ENCODE measurements at regions of chr17 and their contacts with region 1.

Region 1: DNA sequence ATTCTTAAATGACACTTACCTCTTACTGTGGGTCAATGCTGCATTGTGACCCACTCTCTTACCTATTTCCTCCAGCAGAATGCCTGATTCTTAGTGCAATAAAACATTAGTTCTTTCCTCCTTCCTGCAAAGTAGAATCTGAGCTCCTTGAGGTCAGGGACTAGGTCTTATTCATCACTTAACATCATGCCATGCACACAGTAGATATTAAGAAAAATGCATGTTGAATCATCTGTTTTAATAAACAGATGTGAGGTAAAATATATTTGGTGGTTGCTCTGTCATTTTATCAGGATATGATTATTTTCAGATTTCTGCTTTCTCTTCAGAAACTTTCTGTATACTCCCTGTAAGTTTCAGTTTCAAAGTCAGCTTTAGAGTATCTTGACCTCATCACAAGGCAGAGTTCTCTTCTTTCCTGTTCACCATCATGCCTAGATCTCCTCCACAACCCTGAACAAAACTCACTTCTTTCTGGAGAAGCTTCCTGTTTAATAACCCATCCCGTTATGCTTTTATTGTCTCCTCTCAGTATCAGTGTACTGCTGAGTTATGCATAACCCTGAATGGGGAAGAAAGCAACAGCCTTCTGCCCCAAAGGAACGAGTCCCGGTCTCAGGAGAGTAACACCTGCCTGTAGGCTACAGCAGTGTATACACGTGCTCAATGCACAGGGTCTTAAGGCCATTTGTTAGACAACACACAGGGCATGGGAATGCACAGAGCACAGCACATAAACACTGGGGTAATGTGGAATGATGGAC is 30.3 kb upstream of the SUPT4H1 start:
- DNase-seq: peak in 1 of 14 experiments; percentile 45
- ATAC-seq: no peak
- H3K4me3 ChIP-seq: no peak overlapping the region
- H3K4me3 Mint-ChIP-seq: peak overlapping the region; percentile 1
- H3K27ac ChIP-seq: no peak overlapping the region
- H3K27ac Mint-ChIP-seq: peak overlapping the region; percentile 53
- H3K4me1 ChIP-seq: peaks cover 30% of the 10 kb centered on the region
- H3K4me1 Mint-ChIP-seq: peaks cover 46% of the 10 kb centered on the region
- H3K27me3 ChIP-seq: no peaks in the 10 kb centered on the region
- H3K27me3 Mint-ChIP-seq: no peaks in the 10 kb centered on the region
- CTCF ChIP-seq: no peak

Region 2: GRCh38 chr17:58364270-58364942 is 17.9 kb before region 1 on chr17:
- CTCF ChIA-PET with region 1: interaction called, 3 read pairs
- POLR2A ChIA-PET with region 1: interaction called, 11 read pairs
- intact Hi-C with region 1: no loop called
- DNase-seq: no peak
- ATAC-seq: no peak
- H3K4me3 ChIP-seq: no peak overlapping the region
- H3K4me3 Mint-ChIP-seq: no peak overlapping the region
- H3K27ac ChIP-seq: no peak overlapping the region
- H3K27ac Mint-ChIP-seq: no peak overlapping the region
- H3K4me1 ChIP-seq: no peaks in the 10 kb centered on the region
- H3K4me1 Mint-ChIP-seq: no peaks in the 10 kb centered on the region
- H3K27me3 ChIP-seq: no peaks in the 10 kb centered on the region
- H3K27me3 Mint-ChIP-seq: no peaks in the 10 kb centered on the region
- CTCF ChIP-seq: no peak